WTC11 (cell line): ENCODE measurements at regions of chr5 and their contacts with region 1.

Region 1: DNA sequence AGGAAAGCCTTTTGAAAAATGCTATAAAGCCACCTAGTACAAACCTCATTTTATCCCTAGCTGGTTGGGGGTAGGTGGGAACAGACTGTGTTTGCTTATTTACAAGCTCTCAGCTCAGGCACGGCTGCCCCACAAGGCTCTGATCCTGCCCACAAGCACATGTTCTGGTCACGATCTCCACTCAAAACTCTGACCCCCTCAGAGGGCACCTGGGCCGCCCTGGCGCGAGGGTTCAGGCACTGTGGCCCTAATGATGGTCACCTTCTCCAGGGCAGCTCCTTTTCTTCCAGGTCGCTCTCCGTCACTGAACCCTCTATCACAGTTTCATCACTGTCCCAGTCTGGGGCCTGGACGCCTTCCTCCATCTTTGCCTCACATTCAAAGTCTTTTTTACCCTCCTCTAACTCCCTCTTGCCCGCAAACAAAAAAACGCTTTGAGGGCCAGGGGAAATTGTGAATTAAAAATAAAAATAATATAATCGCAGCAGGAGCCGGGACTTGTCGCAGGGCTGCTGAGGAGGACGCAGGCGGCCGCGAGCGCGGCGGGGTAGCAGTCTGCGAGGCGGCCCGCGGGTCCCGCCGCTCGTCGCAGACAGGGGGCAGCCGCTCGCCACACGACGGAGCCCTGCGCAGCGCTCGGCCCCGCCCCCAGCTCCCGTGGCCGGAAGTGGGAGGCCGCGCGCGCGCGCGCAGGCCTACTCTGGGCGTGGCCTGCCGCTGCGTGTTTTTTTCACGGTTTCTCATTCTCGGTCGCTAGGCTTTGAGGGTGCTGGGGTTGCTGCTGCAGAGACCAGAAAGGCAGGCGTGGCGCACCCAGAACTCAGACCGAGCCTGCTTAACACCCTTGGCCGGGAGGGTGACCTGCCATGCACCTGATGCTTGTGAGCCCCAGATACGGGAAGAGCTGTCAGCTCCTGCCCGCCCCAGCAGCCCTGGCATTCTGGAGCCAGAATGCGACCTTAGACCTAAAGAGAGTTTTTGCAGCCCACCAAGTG is at the start of gene ANKRD31:
- DNase-seq: peak; percentile 76
- ATAC-seq: peak; percentile 91
- H3K4me3 Mint-ChIP-seq: peak within 1 kb of the TSS; percentile 78
- H3K27ac Mint-ChIP-seq: peak within 1 kb of the TSS; percentile 91
- H3K4me1 Mint-ChIP-seq: peaks cover 36% of the 10 kb centered on the region
- H3K27me3 Mint-ChIP-seq: no peaks in the 10 kb centered on the region
- CTCF ChIP-seq: peak; percentile 73
- total RNA-seq, gene ANKRD31: 0.09 to 0.18 TPM (median 0.09 TPM) in 3 replicates

Region 2: GRCh38 chr5:75225506-75225905 is 11.1 kb before region 1 on chr5:
- CTCF ChIA-PET with region 1: interaction called, 10 read pairs
- POLR2A ChIA-PET with region 1: no interaction called
- DNase-seq: no peak
- ATAC-seq: no peak
- H3K4me3 Mint-ChIP-seq: no peak overlapping the region
- H3K27ac Mint-ChIP-seq: no peak overlapping the region
- H3K4me1 Mint-ChIP-seq: no peaks in the 10 kb centered on the region
- H3K27me3 Mint-ChIP-seq: no peaks in the 10 kb centered on the region; the same call in 1 of the 2 replicates
- CTCF ChIP-seq: no peak

Region 3: DNA sequence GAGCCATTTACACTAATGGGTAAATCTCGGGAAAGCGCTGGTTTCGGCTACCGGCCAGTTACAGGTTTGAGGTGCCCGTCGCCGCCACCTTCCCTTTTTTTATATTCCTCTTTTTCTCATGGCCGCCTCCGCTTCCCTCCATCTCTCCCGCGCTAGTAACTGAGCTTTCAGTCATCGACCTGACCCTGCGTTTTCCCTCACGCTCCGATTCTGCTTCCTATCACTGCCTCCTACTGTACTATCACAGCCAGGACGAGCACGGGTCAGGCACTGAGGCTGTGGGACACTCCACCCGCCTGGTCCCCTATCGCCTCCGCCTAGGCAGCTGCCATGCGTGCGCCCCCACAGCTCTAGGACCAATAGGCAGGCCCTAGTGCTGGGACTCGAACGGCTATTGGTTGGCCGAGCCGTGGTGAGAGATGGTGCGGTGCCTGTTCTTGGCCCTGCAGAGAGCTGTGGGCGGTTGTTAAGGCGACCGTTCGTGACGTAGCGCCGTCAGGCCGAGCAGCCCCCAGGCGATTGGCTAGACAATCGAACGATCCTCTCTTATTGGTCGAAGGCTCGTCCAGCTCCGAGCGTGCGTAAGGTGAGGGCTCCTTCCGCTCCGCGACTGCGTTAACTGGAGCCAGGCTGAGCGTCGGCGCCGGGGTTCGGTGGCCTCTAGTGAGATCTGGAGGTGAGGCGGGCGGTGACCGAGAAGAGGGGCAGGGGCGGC is 100.2 kb after region 1 on chr5 and contains the start of gene HMGCR:
- CTCF ChIA-PET with region 1: interaction called, 62 read pairs
- POLR2A ChIA-PET with region 1: interaction called, 22 read pairs
- DNase-seq: peak; percentile 99
- ATAC-seq: peak; percentile 98
- H3K4me3 Mint-ChIP-seq: no peak within 1 kb of the TSS
- H3K27ac Mint-ChIP-seq: peak within 1 kb of the TSS; percentile 95
- H3K4me1 Mint-ChIP-seq: peaks cover 31% of the 10 kb centered on the region
- H3K27me3 Mint-ChIP-seq: no peaks in the 10 kb centered on the region
- CTCF ChIP-seq: no peak
- total RNA-seq, gene HMGCR: 137 to 153 TPM (median 145 TPM) in 3 replicates